ENCODE measurements at regions of chr20 and their contacts with region 1.

Region 1: DNA sequence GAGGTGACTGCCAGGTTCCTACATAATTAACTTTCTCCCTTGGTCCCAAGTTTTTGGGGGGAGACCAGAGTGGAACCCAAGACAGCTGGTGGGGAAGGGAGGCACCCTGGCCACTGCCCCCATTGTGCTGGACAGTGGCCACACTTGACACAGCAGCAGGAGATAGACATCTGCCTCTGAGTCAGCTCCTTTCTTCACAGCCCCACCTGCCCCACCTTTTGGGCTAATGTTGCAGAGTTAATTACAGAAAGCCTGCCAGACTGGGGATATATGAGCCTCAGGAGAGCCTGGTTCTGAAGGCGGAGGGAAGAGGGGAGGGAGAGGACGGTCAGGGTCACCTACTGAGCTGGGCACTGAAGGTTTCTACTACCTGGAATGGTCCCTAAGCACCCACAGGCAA is 50.6 kb downstream of the MAFB start:
- DNase-seq: no peak
- H3K4me3 ChIP-seq: no peak overlapping the region
- H3K4me3 Mint-ChIP-seq: peak overlapping the region in 1 of 2 donors; percentile 4
- H3K27ac ChIP-seq: no peak overlapping the region
- H3K27ac Mint-ChIP-seq: no peak overlapping the region
- H3K4me1 ChIP-seq: peaks cover 13 to 15% of the 10 kb centered on the region in 2 donors
- H3K4me1 Mint-ChIP-seq: peaks cover 27% of the 10 kb centered on the region
- H3K27me3 ChIP-seq: peaks cover 0 to 10% of the 10 kb centered on the region in 2 donors
- H3K27me3 Mint-ChIP-seq: peaks cover 11 to 27% (median 16%) of the 10 kb centered on the region in 3 donors
- CTCF ChIP-seq: no peak

Region 2: GRCh38 chr20:40481337-40481736 is 157.1 kb before region 1 on chr20:
- intact Hi-C with region 1: no loop called
- DNase-seq: no peak
- H3K4me3 ChIP-seq: no peak overlapping the region
- H3K4me3 Mint-ChIP-seq: peak overlapping the region in 1 of 2 donors; percentile 27
- H3K27ac ChIP-seq: no peak overlapping the region
- H3K27ac Mint-ChIP-seq: no peak overlapping the region
- H3K4me1 ChIP-seq: no peaks in the 10 kb centered on the region
- H3K4me1 Mint-ChIP-seq: no peaks in the 10 kb centered on the region
- H3K27me3 ChIP-seq: no peaks in the 10 kb centered on the region
- H3K27me3 Mint-ChIP-seq: peaks cover 0 to 11% (median 2%) of the 10 kb centered on the region in 3 donors
- CTCF ChIP-seq: no peak

Region 3: GRCh38 chr20:40583205-40583604 is 55.2 kb before region 1 on chr20:
- intact Hi-C with region 1: loop called in 1 of 2 experiments (anchors 10 kb)
- DNase-seq: peak; percentile 60 to 83 (median 79)
- H3K4me3 ChIP-seq: peak overlapping the region in 1 of 3 experiments; percentile 51
- H3K4me3 Mint-ChIP-seq: peak overlapping the region in 1 of 2 donors; percentile 85
- H3K27ac ChIP-seq: peak overlapping the region; percentile 75 to 86
- H3K27ac Mint-ChIP-seq: peak overlapping the region; percentile 87 to 95 (median 93)
- H3K4me1 ChIP-seq: peaks cover 35% of the 10 kb centered on the region in 2 donors
- H3K4me1 Mint-ChIP-seq: peaks cover 35% of the 10 kb centered on the region
- H3K27me3 ChIP-seq: peaks cover under 1 to 2% of the 10 kb centered on the region in 2 donors
- H3K27me3 Mint-ChIP-seq: peaks cover 4 to 20% (median 6%) of the 10 kb centered on the region in 3 donors
- CTCF ChIP-seq: no peak